Right ventricle myocardium inferior (tissue), 1 donor: ENCODE measurements at regions of chr1 and their contacts with region 1.

Region 1: DNA sequence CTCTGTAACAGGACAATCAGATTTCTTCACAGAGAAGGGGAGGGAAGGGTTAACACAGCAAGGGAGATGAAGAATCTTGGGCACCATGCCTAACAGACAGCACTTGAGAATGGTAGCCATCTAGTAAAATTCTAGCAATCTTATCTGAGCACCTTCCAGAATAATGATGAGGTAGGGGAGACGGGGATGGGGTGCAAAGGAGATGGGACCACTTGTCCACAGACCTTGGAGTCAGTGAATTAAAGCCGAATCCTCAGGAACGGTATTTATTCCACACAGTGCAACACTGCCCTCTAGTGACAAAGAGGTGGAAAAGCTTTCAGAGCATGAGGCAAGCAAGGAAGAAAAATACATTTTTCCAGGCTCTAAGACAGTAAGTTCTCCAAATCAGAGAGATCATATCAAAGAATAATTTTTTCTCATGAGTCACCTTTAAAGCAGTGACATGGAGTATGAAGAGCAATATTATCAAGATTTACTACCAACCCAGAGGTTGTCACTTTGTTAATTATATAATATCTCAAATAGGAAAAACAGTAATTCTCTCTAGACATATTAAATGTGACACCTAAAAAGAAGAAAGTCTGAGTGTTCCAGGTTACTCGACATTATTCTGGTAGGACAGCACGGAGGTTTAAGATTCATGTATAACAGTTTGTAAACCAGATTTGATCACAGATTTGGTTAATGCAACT is 43.3 kb upstream of the LPAR3 start:
- DNase-seq: no peak
- ATAC-seq: peak; percentile 80

Region 2: DNA sequence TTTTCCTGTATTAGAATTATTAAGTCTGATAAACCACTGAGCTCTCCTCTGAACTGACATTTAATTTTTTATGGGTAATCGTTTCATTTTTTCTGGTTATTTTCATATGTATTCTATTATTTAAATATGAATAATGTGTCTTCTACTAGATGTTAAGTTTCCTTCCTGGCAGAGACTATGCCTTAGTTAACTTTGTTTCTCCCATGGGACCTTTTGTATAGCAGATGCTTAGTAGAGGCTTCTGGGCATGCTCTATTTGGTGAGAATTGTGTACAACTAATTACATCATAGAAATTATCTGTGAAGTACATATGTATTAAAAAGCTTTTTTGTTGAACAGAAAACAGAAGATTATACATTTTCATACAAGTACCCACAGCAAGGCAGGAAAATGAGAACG is 385.4 kb before region 1 on chr1:
- intact Hi-C with region 1: no loop called
- DNase-seq: no peak
- ATAC-seq: no peak

Region 3: GRCh38 chr1:84603941-84604830 is 332.1 kb before region 1 on chr1:
- intact Hi-C with region 1: loop called (anchors 10 kb)
- DNase-seq: no peak
- ATAC-seq: peak; percentile 83

Region 4: GRCh38 chr1:84644472-84644871 is 291.8 kb before region 1 on chr1:
- intact Hi-C with region 1: no loop called
- DNase-seq: no peak
- ATAC-seq: no peak

Region 5: GRCh38 chr1:84758968-84759491 is 177.2 kb before region 1 on chr1:
- intact Hi-C with region 1: loop called (anchors 5 kb)
- DNase-seq: no peak
- ATAC-seq: peak; percentile 65

Region 6: DNA sequence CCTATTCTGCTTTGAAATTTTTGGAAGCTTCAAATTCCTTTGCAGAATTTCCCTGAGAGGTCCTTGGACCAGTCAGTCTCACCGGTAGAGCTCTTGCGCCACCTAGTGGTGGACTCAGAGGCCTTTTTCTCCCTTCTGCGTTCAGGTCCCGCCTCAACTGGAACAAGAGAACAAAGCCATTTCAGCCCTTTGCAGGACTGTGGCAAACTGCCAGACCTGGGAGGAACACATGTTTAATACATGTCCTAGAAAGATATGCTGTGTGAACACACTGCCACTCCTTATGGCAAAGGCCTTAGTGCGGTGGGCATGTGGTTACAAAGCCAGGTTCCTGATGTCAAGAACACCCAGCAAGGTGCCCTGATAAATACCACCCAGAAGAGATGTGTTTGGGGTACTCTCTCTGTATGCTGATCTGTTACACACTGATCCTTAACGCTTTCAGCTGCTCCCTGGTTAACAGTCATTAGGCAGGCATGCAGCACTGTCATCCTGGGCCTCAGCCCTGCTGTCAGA is 163.8 kb before region 1 on chr1:
- intact Hi-C with region 1: loop called (anchors 5 kb)
- DNase-seq: no peak
- ATAC-seq: peak; percentile 75